ENCODE measurements at regions of chr17 and their contacts with region 1.

Region 1: DNA sequence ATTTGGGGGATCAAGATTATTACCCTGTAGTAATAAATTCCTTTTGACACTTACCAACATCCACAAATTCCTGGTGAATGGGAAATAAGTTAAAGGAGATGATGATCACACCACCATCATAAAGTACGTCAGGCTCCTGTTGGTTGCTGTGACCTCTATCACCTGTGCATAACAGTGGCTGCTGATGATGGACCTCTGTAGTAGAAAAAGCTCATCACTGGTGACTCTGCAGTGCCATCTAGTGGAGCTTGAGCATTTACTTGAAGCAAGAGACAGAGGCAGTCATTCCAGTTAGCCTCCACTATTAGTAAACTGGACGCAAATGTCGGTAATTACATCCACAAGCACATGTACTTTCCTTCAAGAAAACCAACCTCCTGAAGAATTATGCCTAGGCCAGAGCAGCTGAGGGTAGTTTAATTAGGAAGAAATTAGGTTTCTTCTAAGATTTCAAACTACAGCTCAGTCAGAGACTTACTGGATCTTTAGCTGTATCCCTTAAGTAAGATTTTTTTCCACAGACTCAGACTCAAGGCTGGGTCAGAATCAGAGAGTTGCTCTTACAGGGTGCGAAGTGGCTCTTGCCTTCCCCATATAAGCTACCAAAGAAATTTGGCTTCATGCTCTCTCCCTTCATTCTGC is 39.3 kb downstream of the CYB561 start:
- DNase-seq: peak; percentile 93
- ATAC-seq: peak; percentile 96
- H3K4me3 ChIP-seq: no peak overlapping the region
- H3K27ac ChIP-seq: no peak overlapping the region
- H3K4me1 ChIP-seq: no peaks in the 10 kb centered on the region; a peak in 1 of 4 replicates
- H3K27me3 ChIP-seq: no peaks in the 10 kb centered on the region
- CTCF ChIP-seq: peak; percentile 86 to 99 (median 95)
- POLR2A ChIP-seq: no peak
- RAD21 ChIP-seq: peak; percentile 98

Region 2: GRCh38 chr17:62671583-62672312 is 735.1 kb before region 1 on chr17:
- CTCF ChIA-PET with region 1: interaction called, 47 read pairs
- POLR2A ChIA-PET with region 1: no interaction called
- RAD21 ChIA-PET with region 1: interaction called, 4 to 6 read pairs
- intact Hi-C with region 1: loop called (anchors 1 kb)
- DNase-seq: no peak
- ATAC-seq: peak; percentile 39
- H3K4me3 ChIP-seq: no peak overlapping the region
- H3K27ac ChIP-seq: no peak overlapping the region; the same call in 1 of the 2 replicates
- H3K4me1 ChIP-seq: peaks cover 9 to 14% of the 10 kb centered on the region in 2 experiments; a peak in 3 of 4 replicates
- H3K27me3 ChIP-seq: no peaks in the 10 kb centered on the region
- CTCF ChIP-seq: no peak
- POLR2A ChIP-seq: no peak
- RAD21 ChIP-seq: no peak

Region 3: GRCh38 chr17:62968445-62968923 is 438.3 kb before region 1 on chr17:
- CTCF ChIA-PET with region 1: interaction called, 6 read pairs
- POLR2A ChIA-PET with region 1: no interaction called
- RAD21 ChIA-PET with region 1: no interaction called
- intact Hi-C with region 1: loop called (anchors 1 kb)
- DNase-seq: peak; percentile 83
- ATAC-seq: peak; percentile 63
- H3K4me3 ChIP-seq: peak overlapping the region in 1 of 2 experiments; percentile 18; a peak in 1 of 4 replicates
- H3K27ac ChIP-seq: no peak overlapping the region
- H3K4me1 ChIP-seq: peaks cover 13 to 38% of the 10 kb centered on the region in 2 experiments
- H3K27me3 ChIP-seq: no peaks in the 10 kb centered on the region
- CTCF ChIP-seq: peak; percentile 97 to 100 (median 99)
- POLR2A ChIP-seq: no peak
- RAD21 ChIP-seq: peak; percentile 99

Region 4: GRCh38 chr17:63082273-63082993 is 324.4 kb before region 1 on chr17:
- CTCF ChIA-PET with region 1: interaction called, 66 read pairs
- POLR2A ChIA-PET with region 1: no interaction called
- RAD21 ChIA-PET with region 1: interaction called, 5 to 10 read pairs
- intact Hi-C with region 1: loop called (anchors 1 kb)
- DNase-seq: peak; percentile 10
- ATAC-seq: peak; percentile 59
- H3K4me3 ChIP-seq: no peak overlapping the region
- H3K27ac ChIP-seq: no peak overlapping the region
- H3K4me1 ChIP-seq: no peaks in the 10 kb centered on the region
- H3K27me3 ChIP-seq: no peaks in the 10 kb centered on the region
- CTCF ChIP-seq: peak; percentile 54 to 58 (median 55)
- POLR2A ChIP-seq: no peak
- RAD21 ChIP-seq: peak; percentile 74

Region 5: GRCh38 chr17:63249256-63250004 is 157.4 kb before region 1 on chr17:
- CTCF ChIA-PET with region 1: no interaction called
- POLR2A ChIA-PET with region 1: no interaction called
- RAD21 ChIA-PET with region 1: no interaction called
- intact Hi-C with region 1: loop called (anchors 5 kb)
- DNase-seq: no peak
- ATAC-seq: no peak
- H3K4me3 ChIP-seq: no peak overlapping the region
- H3K27ac ChIP-seq: no peak overlapping the region
- H3K4me1 ChIP-seq: no peaks in the 10 kb centered on the region
- H3K27me3 ChIP-seq: no peaks in the 10 kb centered on the region
- CTCF ChIP-seq: no peak
- POLR2A ChIP-seq: no peak
- RAD21 ChIP-seq: no peak

Region 6: GRCh38 chr17:63490321-63490720 is 83.5 kb after region 1 on chr17:
- CTCF ChIA-PET with region 1: no interaction called
- POLR2A ChIA-PET with region 1: no interaction called
- RAD21 ChIA-PET with region 1: no interaction called
- intact Hi-C with region 1: no loop called
- DNase-seq: no peak
- ATAC-seq: peak; percentile 31; the same call in 1 of the 2 replicates
- H3K4me3 ChIP-seq: no peak overlapping the region
- H3K27ac ChIP-seq: no peak overlapping the region
- H3K4me1 ChIP-seq: no peaks in the 10 kb centered on the region
- H3K27me3 ChIP-seq: no peaks in the 10 kb centered on the region; the same call in 1 of the 2 replicates
- CTCF ChIP-seq: no peak
- POLR2A ChIP-seq: no peak
- RAD21 ChIP-seq: no peak

Region 7: GRCh38 chr17:63519972-63520882 is 113.4 kb after region 1 on chr17:
- CTCF ChIA-PET with region 1: no interaction called
- POLR2A ChIA-PET with region 1: no interaction called
- RAD21 ChIA-PET with region 1: no interaction called
- intact Hi-C with region 1: no loop called
- DNase-seq: no peak
- ATAC-seq: no peak
- H3K4me3 ChIP-seq: no peak overlapping the region
- H3K27ac ChIP-seq: no peak overlapping the region; the same call in 1 of the 2 replicates
- H3K4me1 ChIP-seq: peaks cover 16 to 26% of the 10 kb centered on the region in 2 experiments
- H3K27me3 ChIP-seq: peaks cover 7% of the 10 kb centered on the region; the same call in 1 of the 2 replicates
- CTCF ChIP-seq: no peak
- POLR2A ChIP-seq: no peak
- RAD21 ChIP-seq: no peak